ENCODE measurements at regions of chr5 and their contacts with region 1.

Region 1: DNA sequence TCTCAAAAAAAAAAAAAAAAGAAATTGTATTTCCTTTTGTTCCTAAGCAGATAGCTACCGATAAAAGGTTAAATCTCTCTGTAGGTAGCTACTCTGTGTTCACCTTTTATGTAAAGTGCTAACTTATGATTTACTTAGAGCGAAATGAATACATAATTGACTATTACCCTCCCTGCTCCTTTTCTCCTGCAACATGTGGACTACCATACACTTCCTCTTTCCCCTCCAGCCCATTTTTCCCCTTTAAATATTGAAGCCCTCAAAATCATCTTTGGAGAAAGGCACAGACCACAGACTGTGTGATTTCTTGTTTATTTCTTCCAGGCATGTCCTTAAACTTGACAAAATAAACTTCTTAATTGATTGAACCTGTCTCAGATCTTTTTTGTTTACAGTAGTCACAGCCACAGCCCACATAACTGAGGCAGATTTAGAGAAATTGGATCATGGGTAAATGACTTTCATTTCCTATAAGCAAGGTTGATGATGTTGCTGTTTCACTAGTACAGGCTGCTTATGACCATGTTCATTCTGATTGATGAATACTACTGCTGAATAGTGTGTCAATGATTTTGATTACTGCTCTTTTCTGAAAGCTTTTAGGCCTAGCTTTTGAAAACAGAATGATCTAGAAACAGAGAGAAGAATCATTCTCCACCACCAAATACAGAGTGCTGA is 59.2 kb downstream of the PHAX start:
- DNase-seq: no peak
- H3K4me3 ChIP-seq: no peak overlapping the region
- H3K27ac ChIP-seq: no peak overlapping the region
- H3K4me1 ChIP-seq: no peaks in the 10 kb centered on the region
- H3K27me3 ChIP-seq: no peaks in the 10 kb centered on the region
- CTCF ChIP-seq: no peak
- EP300 ChIP-seq: no peak
- POLR2A ChIP-seq: no peak

Region 2: GRCh38 chr5:128632264-128632663 is 1972.3 kb after region 1 on chr5:
- intact Hi-C with region 1: loop called in 1 of 4 experiments (anchors 5 kb)
- DNase-seq: no peak
- H3K4me3 ChIP-seq: no peak overlapping the region
- H3K27ac ChIP-seq: no peak overlapping the region
- H3K4me1 ChIP-seq: no peaks in the 10 kb centered on the region
- H3K27me3 ChIP-seq: no peaks in the 10 kb centered on the region
- CTCF ChIP-seq: no peak
- EP300 ChIP-seq: no peak
- POLR2A ChIP-seq: no peak